Esophagus squamous epithelium (tissue), 5 donors: ENCODE measurements at regions of chr11 and their contacts with region 1.

Region 1: GRCh38 chr11:11022125-11022730 is 164.4 kb upstream of the ZBED5 start:
- DNase-seq: no peak
- H3K4me3 ChIP-seq: no peak overlapping the region
- H3K27ac ChIP-seq: no peak overlapping the region
- H3K4me1 ChIP-seq: no peaks in the 10 kb centered on the region
- H3K27me3 ChIP-seq: no peaks in the 10 kb centered on the region
- CTCF ChIP-seq: peak in 5 of 6 experiments; percentile 32 to 59 (median 44)
- POLR2A ChIP-seq: no peak

Region 2: DNA sequence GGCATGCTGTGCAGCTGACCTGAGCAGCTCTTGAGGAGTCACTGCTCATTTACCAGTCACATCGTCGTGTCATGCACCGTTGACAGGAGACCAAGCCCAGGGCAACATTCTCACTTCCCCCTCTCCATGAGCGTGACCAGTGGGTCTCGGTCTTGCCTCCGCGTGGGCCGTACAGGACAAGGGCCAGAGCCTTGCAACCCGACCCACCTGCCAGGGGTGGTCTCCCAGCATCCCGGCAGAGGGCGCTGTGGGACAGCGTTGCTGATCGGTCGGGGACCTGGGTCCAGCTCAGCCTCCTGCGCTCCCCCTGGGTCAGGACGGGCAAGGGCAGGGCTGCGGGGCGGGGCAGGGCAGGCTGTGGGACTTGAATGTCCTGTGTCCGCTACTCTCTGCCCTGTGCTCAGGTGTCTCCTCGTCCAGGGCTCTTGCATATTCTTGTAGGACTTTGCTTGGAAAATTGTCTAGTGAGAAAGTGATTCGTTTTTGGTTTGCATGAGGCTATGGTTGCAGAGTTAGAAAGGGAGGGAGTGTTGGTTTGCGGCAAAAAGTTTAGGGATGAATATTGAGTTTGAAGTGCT is 229.7 kb before region 1 on chr11:
- intact Hi-C with region 1: loop called (anchors 5 kb)
- DNase-seq: peak; percentile 19
- H3K4me3 ChIP-seq: peak overlapping the region in 1 of 4 donors; percentile 49
- H3K27ac ChIP-seq: no peak overlapping the region
- H3K4me1 ChIP-seq: peaks cover 0 to 11% (median 5%) of the 10 kb centered on the region in 3 donors
- H3K27me3 ChIP-seq: no peaks in the 10 kb centered on the region
- CTCF ChIP-seq: peak; percentile 85 to 94 (median 90)
- POLR2A ChIP-seq: no peak

Region 3: GRCh38 chr11:10899121-10899830 is 123.0 kb before region 1 on chr11:
- intact Hi-C with region 1: no loop called
- DNase-seq: no peak
- H3K4me3 ChIP-seq: peak overlapping the region in 2 of 4 donors; percentile 22 to 42
- H3K27ac ChIP-seq: peak overlapping the region; percentile 90 to 97 (median 95)
- H3K4me1 ChIP-seq: peaks cover 47 to 92% (median 61%) of the 10 kb centered on the region in 3 donors
- H3K27me3 ChIP-seq: no peaks in the 10 kb centered on the region
- CTCF ChIP-seq: no peak
- POLR2A ChIP-seq: peak in 2 of 4 donors; percentile 3 to 27

Region 4: DNA sequence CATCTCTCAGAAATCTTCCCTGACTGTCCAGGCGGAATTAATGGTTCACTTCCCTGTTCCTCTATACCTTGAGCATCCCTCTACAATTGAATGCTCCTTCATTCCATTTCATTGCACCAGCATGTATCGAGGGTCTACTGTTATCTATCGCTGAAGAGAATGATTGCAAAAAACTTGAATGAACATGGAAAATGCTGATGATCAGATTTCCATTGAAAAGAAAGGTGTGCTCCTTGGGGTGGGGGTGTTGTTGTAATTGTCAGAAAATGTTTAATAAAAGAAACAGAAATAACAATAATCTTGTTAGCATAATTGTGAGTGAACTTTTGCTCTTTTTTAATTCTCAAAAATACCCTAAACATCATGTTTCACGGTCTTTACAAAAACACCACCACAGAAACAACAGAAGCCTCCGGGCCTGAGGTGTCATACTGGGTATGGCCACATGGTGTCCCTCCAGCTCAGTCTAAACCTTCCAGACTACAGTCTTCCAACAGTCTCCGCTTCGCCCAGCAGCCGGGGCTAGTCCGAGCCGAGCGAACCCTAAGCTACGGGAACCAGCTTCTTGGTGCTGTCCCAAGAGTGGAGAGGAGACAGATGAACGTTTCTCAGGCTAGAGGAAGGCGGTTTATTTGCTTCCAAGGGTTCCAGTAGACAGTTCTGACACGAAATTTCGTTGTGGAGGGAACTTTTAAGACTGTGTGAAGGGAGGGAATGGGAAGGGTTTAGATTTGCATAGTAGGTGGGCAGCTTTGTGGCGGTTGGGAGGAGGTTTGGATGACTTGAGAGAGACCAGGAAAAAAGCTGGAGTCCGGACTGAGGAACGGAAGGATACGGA is 88.6 kb before region 1 on chr11:
- intact Hi-C with region 1: loop called (anchors 5 kb)
- DNase-seq: peak; percentile 60
- H3K4me3 ChIP-seq: peak overlapping the region; percentile 27 to 64 (median 46)
- H3K27ac ChIP-seq: peak overlapping the region; percentile 68 to 87 (median 87)
- H3K4me1 ChIP-seq: peaks cover 8 to 49% (median 11%) of the 10 kb centered on the region in 3 donors
- H3K27me3 ChIP-seq: no peaks in the 10 kb centered on the region
- CTCF ChIP-seq: peak; percentile 90 to 98 (median 98)
- POLR2A ChIP-seq: peak in 1 of 4 donors; percentile 14